Kidney (tissue), 22 donors: ENCODE measurements at regions of chr5 and their contacts with region 1.

Region 1: GRCh38 chr5:5419294-5420210 is 2.9 kb upstream of the ICE1 start:
- DNase-seq: peak in 4 of 5 donors; percentile 27 to 64 (median 60)
- H3K4me3 ChIP-seq: no peak overlapping the region
- H3K27ac ChIP-seq: no peak overlapping the region
- H3K4me1 ChIP-seq: peaks cover 6 to 21% (median 12%) of the 10 kb centered on the region in 3 donors
- H3K27me3 ChIP-seq: no peaks in the 10 kb centered on the region
- CTCF ChIP-seq: peak; percentile 85

Region 2: DNA sequence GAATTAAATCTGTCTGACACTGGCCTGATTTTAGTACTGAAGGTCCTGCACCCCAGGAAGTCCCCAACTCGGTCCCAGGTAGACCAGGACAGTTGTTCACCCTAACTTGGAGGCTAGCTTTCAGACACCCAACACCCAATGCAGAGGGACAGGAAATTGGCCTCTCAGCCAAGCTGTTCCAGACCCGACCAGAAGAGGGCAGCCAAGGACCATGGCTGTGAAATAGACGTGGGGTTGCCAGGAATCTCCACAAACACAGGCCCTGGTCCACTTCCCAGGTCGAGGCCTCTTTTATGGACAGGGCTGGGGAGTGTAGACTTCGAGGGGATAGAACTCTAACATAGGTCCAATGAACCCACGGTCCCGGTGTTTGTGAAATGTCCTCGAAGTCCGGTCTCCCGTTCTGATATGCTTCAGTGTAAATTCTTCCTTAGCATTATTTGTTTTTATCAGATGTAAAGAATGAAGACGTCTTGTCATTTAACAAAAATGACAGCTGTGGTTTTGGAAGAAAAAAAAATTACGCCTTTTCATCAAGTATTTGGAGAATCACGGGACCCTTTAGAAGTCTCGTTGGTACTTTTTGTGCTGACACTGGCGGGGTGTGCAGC is 539.8 kb before region 1 on chr5:
- intact Hi-C with region 1: loop called (anchors 10 kb)
- DNase-seq: peak; percentile 85 to 90 (median 87)
- H3K4me3 ChIP-seq: no peak overlapping the region
- H3K27ac ChIP-seq: no peak overlapping the region
- H3K4me1 ChIP-seq: peaks cover 2 to 6% (median 3%) of the 10 kb centered on the region in 3 donors
- H3K27me3 ChIP-seq: no peaks in the 10 kb centered on the region
- CTCF ChIP-seq: peak; percentile 98

Region 3: GRCh38 chr5:5141625-5142532 is 277.7 kb before region 1 on chr5:
- intact Hi-C with region 1: loop called (anchors 5 kb)
- DNase-seq: peak in 3 of 5 donors; percentile 55 to 88 (median 79)
- H3K4me3 ChIP-seq: peak overlapping the region; percentile 64 to 84 (median 77)
- H3K27ac ChIP-seq: no peak overlapping the region
- H3K4me1 ChIP-seq: peaks cover 0 to 5% (median 5%) of the 10 kb centered on the region in 3 donors
- H3K27me3 ChIP-seq: peaks cover 8% of the 10 kb centered on the region
- CTCF ChIP-seq: peak; percentile 59

Region 4: GRCh38 chr5:5363045-5363444 is 56.5 kb before region 1 on chr5:
- intact Hi-C with region 1: no loop called
- DNase-seq: no peak
- H3K4me3 ChIP-seq: no peak overlapping the region
- H3K27ac ChIP-seq: no peak overlapping the region
- H3K4me1 ChIP-seq: peaks cover 0 to 6% (median 0%) of the 10 kb centered on the region in 3 donors
- H3K27me3 ChIP-seq: no peaks in the 10 kb centered on the region
- CTCF ChIP-seq: no peak

Region 5: DNA sequence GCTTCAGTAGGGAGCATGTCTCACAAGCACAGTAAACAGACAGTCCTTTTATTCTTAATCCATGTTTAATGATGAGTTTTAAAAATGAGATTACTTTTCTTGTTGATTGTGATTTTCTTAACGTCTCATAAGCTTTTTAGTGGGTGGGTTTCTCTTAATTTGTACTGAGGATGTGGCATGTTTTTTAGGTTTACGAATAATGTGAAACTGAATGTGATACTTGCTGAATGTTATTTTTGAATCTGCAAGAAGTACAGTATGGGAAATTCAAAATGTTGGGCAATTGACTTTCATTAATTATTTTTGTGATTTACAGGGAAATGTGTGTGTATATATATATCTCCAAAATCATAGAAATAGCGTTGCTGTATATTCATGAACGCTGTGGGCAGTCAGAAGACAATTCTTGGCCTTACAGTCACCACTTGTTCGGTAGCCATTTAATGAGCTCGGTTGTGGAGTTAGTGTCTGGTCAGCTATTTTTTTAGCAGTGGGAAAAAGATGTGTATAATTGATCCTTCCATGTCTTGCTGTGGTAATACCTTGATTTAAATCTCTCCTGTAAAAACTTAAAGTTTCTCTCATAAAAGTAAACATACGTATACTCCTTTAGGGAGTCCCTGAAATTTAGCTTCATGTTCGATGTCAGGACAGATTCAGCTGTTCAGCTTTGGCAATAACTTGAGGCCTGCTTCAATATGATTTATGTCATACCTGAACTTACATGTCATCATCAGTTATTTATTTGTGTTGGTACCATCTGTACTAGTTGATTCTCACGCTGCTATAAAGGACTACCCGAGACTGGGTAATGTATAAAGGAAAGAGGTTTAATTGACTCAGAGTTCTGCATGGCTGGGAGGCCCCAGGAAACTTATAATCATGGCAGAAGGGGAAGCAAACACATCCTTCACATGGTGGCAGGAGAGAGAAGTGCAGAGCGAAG is 17.9 kb after region 1 on chr5:
- intact Hi-C with region 1: no loop called
- DNase-seq: no peak
- H3K4me3 ChIP-seq: no peak overlapping the region
- H3K27ac ChIP-seq: no peak overlapping the region
- H3K4me1 ChIP-seq: peaks cover 0 to 6% (median 0%) of the 10 kb centered on the region in 3 donors
- H3K27me3 ChIP-seq: no peaks in the 10 kb centered on the region
- CTCF ChIP-seq: no peak